AG04450 (cell line): ENCODE measurements at regions of chr6 and their contacts with region 1.

Region 1: DNA sequence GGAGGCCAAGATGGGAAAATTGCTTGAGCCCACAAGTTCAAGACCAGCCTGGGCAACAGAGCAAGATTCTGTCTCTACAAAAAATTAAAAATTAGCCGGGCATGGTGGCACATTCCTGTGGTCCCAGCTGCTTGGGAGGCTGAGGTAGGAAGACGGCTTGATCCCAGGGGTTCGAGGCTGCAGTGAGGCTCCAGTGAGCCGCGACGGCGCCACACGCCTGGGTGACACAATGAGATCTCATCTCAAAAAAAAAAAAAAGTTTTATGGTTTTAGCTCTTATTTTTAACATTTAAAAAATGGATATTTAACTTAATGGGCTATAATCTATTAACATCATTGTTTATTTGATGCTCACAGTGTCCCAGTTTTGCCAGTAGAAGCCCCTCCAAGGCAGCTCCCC is 97.2 kb upstream of the RIPOR2 start:
- DNase-seq: no peak
- H3K4me3 ChIP-seq: no peak overlapping the region
- H3K27ac ChIP-seq: no peak overlapping the region
- H3K27me3 ChIP-seq: no peaks in the 10 kb centered on the region
- CTCF ChIP-seq: no peak

Region 2: GRCh38 chr6:24831771-24832716 is 200.9 kb before region 1 on chr6:
- CTCF ChIA-PET with region 1: no interaction called
- POLR2A ChIA-PET with region 1: interaction called, 18 read pairs
- DNase-seq: no peak
- H3K4me3 ChIP-seq: no peak overlapping the region
- H3K27ac ChIP-seq: no peak overlapping the region
- H3K27me3 ChIP-seq: no peaks in the 10 kb centered on the region
- CTCF ChIP-seq: no peak

Region 3: GRCh38 chr6:25053875-25054371 is 21.0 kb after region 1 on chr6:
- CTCF ChIA-PET with region 1: no interaction called
- POLR2A ChIA-PET with region 1: no interaction called
- DNase-seq: peak; percentile 59
- H3K4me3 ChIP-seq: no peak overlapping the region
- H3K27ac ChIP-seq: peak overlapping the region; percentile 92
- H3K27me3 ChIP-seq: no peaks in the 10 kb centered on the region
- CTCF ChIP-seq: 0 out of 2 replicates have a peak, but pooled peaks have one; percentile 5